Mammary epithelial cell (primary cell): ENCODE measurements at regions of chr20 and their contacts with region 1.

Region 1: DNA sequence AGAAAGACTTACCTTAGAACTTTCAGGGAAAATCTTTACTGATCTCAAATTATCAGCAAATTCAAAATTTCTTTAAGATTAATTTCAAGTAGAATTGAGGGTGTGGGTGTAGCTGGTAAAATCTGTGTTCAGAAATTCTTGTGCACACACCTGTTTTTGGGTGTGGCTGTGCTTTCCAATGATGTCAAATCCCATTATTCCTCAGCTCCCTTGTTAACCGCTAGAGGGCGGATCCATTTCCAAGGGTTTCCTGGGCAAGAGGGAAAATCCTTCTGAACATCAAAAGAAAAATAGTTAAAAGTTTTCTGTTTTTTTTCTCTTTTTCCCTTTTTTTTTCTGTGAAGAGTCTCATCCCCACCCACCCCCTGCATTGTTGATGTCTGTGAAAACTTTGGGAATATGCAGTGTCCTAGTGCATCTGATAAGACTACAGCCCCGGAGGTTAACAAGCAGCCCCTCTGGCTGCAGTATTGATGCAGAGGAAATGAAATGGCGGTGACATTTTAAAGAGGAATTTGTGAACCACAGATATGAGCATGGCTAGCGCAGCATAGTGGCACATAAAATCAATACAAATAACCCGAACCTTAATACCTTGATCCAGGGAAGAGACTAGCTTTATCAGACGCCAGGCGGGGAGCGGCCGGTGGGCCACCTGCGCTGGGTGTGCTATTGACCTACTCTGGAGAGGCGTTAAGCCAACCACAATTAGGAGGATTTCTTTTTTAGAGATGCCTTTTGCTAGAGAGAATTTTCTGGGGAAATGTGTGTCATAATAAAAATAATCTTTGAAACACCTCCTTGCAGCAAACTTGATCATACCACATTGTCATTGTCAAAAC is 130.9 kb downstream of the FOXA2 start:
- DNase-seq: peak; percentile 43
- H3K4me3 ChIP-seq: no peak overlapping the region
- H3K27ac ChIP-seq: no peak overlapping the region
- H3K4me1 ChIP-seq: no peaks in the 10 kb centered on the region
- H3K27me3 ChIP-seq: no peaks in the 10 kb centered on the region
- CTCF ChIP-seq: peak; percentile 78 to 84

Region 2: GRCh38 chr20:22333885-22334545 is 119.4 kb before region 1 on chr20:
- CTCF ChIA-PET with region 1: no interaction called
- dilution Hi-C with region 1: no loop called
- in situ Hi-C with region 1: loop called in 1 of 2 experiments (anchors 10 kb)
- intact Hi-C with region 1: loop called (anchors 1 kb)
- DNase-seq: peak; percentile 40
- H3K4me3 ChIP-seq: no peak overlapping the region
- H3K27ac ChIP-seq: no peak overlapping the region
- H3K4me1 ChIP-seq: no peaks in the 10 kb centered on the region
- H3K27me3 ChIP-seq: no peaks in the 10 kb centered on the region
- CTCF ChIP-seq: peak; percentile 80 to 89

Region 3: GRCh38 chr20:22339091-22339881 is 114.2 kb before region 1 on chr20:
- CTCF ChIA-PET with region 1: no interaction called
- dilution Hi-C with region 1: no loop called
- in situ Hi-C with region 1: loop called in 1 of 2 experiments (anchors 10 kb)
- intact Hi-C with region 1: loop called (anchors 1 kb)
- DNase-seq: peak; percentile 65
- H3K4me3 ChIP-seq: no peak overlapping the region
- H3K27ac ChIP-seq: no peak overlapping the region
- H3K4me1 ChIP-seq: peaks cover 22% of the 10 kb centered on the region
- H3K27me3 ChIP-seq: no peaks in the 10 kb centered on the region
- CTCF ChIP-seq: peak; percentile 72 to 82

Region 4: GRCh38 chr20:22346716-22347115 is 106.7 kb before region 1 on chr20:
- CTCF ChIA-PET with region 1: no interaction called
- dilution Hi-C with region 1: loop called (anchors 5 kb)
- in situ Hi-C with region 1: no loop called
- intact Hi-C with region 1: no loop called
- DNase-seq: peak; percentile 17
- H3K4me3 ChIP-seq: no peak overlapping the region
- H3K27ac ChIP-seq: no peak overlapping the region
- H3K4me1 ChIP-seq: peaks cover 6% of the 10 kb centered on the region
- H3K27me3 ChIP-seq: no peaks in the 10 kb centered on the region
- CTCF ChIP-seq: no peak

Region 5: DNA sequence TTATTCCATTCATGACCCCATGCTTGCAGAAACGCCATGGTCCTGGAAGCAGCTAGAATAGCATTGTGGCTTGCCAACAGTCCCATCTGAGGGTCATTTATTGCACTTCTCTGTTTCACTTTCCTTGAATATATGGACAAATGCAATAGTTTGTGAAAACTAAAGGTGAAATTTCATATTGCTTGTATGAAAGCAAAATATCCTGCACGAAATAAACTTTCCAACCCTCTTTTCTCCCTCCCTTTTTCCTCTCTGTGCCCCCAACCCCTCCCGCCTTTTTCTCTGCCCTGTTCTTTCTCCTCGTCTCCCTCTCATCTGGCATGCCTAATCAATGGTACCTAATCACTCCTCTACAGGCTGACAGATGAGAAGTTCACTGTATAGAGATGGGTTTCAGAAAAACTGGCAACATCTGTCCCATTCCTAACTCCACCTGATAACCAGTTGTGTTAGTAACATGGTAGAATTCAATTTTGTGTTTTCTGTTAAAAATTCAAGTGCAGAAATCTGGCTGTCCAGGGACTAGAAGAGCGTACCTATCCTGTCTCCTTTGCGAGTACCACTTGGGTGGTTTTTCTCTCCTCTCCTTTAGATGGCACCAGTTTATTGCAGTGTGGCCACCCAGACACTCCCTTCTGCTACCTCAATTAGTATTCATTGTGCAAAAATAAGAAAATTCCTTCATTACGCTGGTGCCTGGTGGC is 67.7 kb before region 1 on chr20:
- CTCF ChIA-PET with region 1: no interaction called
- dilution Hi-C with region 1: no loop called
- in situ Hi-C with region 1: no loop called
- intact Hi-C with region 1: loop called (anchors 5 kb)
- DNase-seq: peak; percentile 27
- H3K4me3 ChIP-seq: no peak overlapping the region
- H3K27ac ChIP-seq: no peak overlapping the region
- H3K4me1 ChIP-seq: peaks cover 62% of the 10 kb centered on the region
- H3K27me3 ChIP-seq: no peaks in the 10 kb centered on the region
- CTCF ChIP-seq: peak; percentile 32 to 56

Region 6: DNA sequence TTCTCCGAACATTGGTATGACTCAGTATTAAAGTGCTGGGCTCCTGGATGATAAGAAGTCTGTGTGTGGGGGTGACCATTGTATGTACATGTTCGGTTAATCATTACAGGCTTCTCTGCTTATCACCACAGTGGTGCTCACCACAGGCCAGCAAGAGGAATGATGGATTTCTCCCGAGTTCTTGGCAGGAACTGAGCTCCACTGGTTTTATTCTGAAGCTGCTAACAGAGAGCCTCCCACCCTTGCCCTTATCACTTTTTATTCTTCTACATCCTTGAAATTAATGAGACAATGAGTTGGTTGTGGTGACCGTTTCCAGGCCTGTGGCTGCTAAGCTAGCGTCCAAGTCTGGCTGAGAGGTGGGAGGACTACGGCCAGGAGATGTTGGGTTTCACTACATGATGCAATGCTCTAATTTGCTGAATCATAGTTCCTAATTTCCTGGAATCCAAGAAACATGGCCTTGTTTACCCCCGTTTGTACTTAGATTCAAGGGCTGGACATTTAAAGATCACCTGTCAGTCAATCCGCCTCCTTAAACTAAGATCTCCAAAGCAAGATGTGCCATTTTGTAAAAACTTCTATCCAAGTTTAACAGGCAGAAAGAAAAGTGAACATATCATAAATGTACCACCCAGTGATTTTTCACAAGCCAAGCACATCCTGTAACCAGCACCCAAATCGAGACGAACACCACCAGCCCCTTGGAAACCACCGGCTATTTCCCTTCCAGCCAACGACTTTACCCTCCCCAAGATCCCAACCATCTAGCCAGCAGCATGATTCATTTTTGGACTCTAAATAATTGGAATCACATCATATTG is 41.6 kb before region 1 on chr20:
- CTCF ChIA-PET with region 1: no interaction called
- dilution Hi-C with region 1: loop called (anchors 5 kb)
- in situ Hi-C with region 1: no loop called
- intact Hi-C with region 1: no loop called
- DNase-seq: no peak
- H3K4me3 ChIP-seq: no peak overlapping the region
- H3K27ac ChIP-seq: no peak overlapping the region
- H3K4me1 ChIP-seq: no peaks in the 10 kb centered on the region
- H3K27me3 ChIP-seq: no peaks in the 10 kb centered on the region
- CTCF ChIP-seq: no peak

Region 7: GRCh38 chr20:22684072-22684762 is 230.8 kb after region 1 on chr20:
- CTCF ChIA-PET with region 1: no interaction called
- dilution Hi-C with region 1: no loop called
- in situ Hi-C with region 1: no loop called
- intact Hi-C with region 1: loop called (anchors 1 kb)
- DNase-seq: peak; percentile 54
- H3K4me3 ChIP-seq: no peak overlapping the region
- H3K27ac ChIP-seq: no peak overlapping the region
- H3K4me1 ChIP-seq: no peaks in the 10 kb centered on the region
- H3K27me3 ChIP-seq: no peaks in the 10 kb centered on the region
- CTCF ChIP-seq: peak; percentile 79 to 91

Region 8: GRCh38 chr20:22763257-22763906 is 309.9 kb after region 1 on chr20:
- CTCF ChIA-PET with region 1: no interaction called
- dilution Hi-C with region 1: no loop called
- in situ Hi-C with region 1: no loop called
- intact Hi-C with region 1: no loop called
- DNase-seq: peak; percentile 91
- H3K4me3 ChIP-seq: peak overlapping the region in 2 of 3 experiments; percentile 8 to 36
- H3K27ac ChIP-seq: peak overlapping the region; percentile 98
- H3K4me1 ChIP-seq: peaks cover 44% of the 10 kb centered on the region
- H3K27me3 ChIP-seq: no peaks in the 10 kb centered on the region
- CTCF ChIP-seq: no peak